MCF 10A (cell line): ENCODE measurements at regions of chr10 and their contacts with region 1.

Region 1: GRCh38 chr10:129332476-129332875 is 134.6 kb upstream of the MGMT start:
- DNase-seq: peak; percentile 66
- H3K4me3 Mint-ChIP-seq: no peak overlapping the region
- H3K27ac Mint-ChIP-seq: no peak overlapping the region
- H3K4me1 Mint-ChIP-seq: peaks cover 11% of the 10 kb centered on the region
- H3K27me3 Mint-ChIP-seq: no peaks in the 10 kb centered on the region
- CTCF ChIP-seq: peak; percentile 33

Region 2: DNA sequence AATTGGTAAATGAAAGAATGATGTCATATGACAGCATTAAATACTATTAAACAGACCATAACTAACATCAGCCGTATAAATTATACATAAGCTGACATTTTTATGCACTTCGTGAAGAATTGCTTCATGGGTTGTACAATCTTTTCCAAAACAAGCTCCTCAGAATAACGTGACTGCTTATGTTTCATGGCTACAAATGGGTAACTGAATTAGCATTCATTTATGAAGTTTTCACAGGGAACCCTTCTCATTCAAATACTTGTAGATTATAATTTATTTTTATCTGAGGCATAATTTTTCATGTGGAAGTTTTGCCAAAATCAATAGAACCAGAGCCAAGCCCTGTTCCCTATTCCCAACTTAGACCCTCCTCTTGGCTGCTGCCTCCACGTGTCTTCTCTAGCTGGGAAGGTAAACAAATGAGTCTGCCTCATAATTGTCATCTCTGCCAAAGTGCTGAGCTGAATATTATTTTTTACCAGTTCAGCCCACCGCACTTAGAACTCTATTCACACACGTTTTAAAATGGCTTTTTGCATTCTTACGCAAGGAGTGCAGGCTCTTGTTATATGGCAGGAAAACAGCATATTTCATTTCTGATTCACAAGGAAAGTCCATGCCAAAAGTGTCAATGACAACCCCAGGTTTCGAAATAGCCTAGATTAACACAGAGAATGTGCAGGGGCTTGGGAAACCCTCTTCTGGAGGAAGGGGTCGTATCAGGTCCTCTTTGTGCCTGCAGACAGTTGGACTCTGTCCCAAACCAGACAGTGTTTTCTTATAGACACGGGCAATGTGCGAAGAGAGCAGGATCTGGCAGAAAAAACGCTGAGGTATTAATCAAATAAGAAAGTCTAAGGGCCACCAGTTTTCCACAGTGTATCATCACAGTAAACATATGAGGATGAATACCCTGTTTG is 236.2 kb before region 1 on chr10:
- CTCF ChIA-PET with region 1: interaction called, 3 read pairs
- POLR2A ChIA-PET with region 1: interaction called, 3 read pairs
- intact Hi-C with region 1: loop called (anchors 5 kb)
- DNase-seq: peak; percentile 97
- H3K4me3 Mint-ChIP-seq: peak overlapping the region; percentile 38
- H3K27ac Mint-ChIP-seq: peak overlapping the region; percentile 71
- H3K4me1 Mint-ChIP-seq: peaks cover 21% of the 10 kb centered on the region
- H3K27me3 Mint-ChIP-seq: no peaks in the 10 kb centered on the region
- CTCF ChIP-seq: no peak

Region 3: GRCh38 chr10:129193148-129193547 is 139.3 kb before region 1 on chr10:
- CTCF ChIA-PET with region 1: interaction called, 3 read pairs
- POLR2A ChIA-PET with region 1: no interaction called
- intact Hi-C with region 1: loop called (anchors 10 kb)
- DNase-seq: peak; percentile 90
- H3K4me3 Mint-ChIP-seq: peak overlapping the region; percentile 69
- H3K27ac Mint-ChIP-seq: peak overlapping the region; percentile 90
- H3K4me1 Mint-ChIP-seq: peaks cover 27% of the 10 kb centered on the region
- H3K27me3 Mint-ChIP-seq: no peaks in the 10 kb centered on the region
- CTCF ChIP-seq: no peak